ENCODE measurements at regions of chr1 and their contacts with region 1.

Region 1: DNA sequence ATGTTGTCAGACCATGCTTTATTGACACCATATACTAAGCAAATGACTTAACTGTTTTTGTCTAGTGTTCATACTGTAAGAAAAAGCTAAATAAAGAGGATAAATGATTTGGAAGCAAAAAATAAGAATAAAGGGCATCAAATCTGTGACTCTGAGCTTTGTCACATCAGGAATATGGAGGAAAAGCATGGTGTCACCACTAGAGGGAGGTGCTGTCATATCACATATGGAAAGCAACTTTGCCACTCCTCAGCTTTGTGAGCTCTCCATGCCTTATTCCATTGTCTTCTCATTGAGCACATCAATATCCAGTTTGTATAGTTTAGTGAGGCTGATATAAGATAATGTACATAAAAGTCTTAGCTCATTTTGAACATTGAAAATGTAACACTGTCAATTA is 20.8 kb upstream of the GBP1 start:
- DNase-seq: peak; percentile 80
- H3K4me3 Mint-ChIP-seq: no peak overlapping the region
- H3K27ac Mint-ChIP-seq: no peak overlapping the region
- H3K4me1 Mint-ChIP-seq: peaks cover 8% of the 10 kb centered on the region
- H3K27me3 Mint-ChIP-seq: no peaks in the 10 kb centered on the region

Region 2: GRCh38 chr1:89065079-89065868 is 20.5 kb before region 1 on chr1 and contains the start of gene GBP1:
- CTCF ChIA-PET with region 1: interaction called, 18 read pairs
- POLR2A ChIA-PET with region 1: no interaction called
- DNase-seq: peak; percentile 52
- H3K4me3 Mint-ChIP-seq: peak within 1 kb of the TSS; percentile 99
- H3K27ac Mint-ChIP-seq: peak within 1 kb of the TSS; percentile 94
- H3K4me1 Mint-ChIP-seq: peaks cover 60% of the 10 kb centered on the region
- H3K27me3 Mint-ChIP-seq: no peaks in the 10 kb centered on the region
- total RNA-seq, gene GBP1: 272 to 292 TPM

Region 3: DNA sequence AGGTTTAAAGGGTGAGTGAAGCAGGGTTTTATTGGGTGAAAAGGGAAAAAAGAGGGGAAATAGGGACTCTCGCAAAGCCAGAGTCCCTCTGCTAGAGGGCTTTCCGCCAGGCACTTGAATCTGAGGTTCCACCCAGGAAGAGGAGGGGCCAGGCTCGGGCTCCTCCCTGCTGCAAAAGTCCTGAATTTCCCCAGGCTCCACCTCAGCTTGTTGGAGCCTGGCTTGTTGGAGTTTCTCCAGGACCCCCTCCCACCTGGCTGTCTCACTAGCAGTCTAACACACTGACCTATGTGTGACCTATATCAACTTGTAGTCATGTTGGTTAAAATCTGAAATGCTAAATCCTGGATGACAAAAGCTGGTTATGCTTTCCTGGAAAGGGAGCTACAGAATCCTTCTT is 14.6 kb after region 1 on chr1:
- CTCF ChIA-PET with region 1: interaction called, 12 read pairs
- POLR2A ChIA-PET with region 1: no interaction called
- DNase-seq: no peak
- H3K4me3 Mint-ChIP-seq: no peak overlapping the region
- H3K27ac Mint-ChIP-seq: no peak overlapping the region
- H3K4me1 Mint-ChIP-seq: peaks cover 4% of the 10 kb centered on the region
- H3K27me3 Mint-ChIP-seq: no peaks in the 10 kb centered on the region

Region 4: GRCh38 chr1:89855413-89856123 is 769.8 kb after region 1 on chr1:
- CTCF ChIA-PET with region 1: no interaction called
- POLR2A ChIA-PET with region 1: interaction called, 10 read pairs
- DNase-seq: peak; percentile 23
- H3K4me3 Mint-ChIP-seq: peak overlapping the region; percentile 29
- H3K27ac Mint-ChIP-seq: no peak overlapping the region
- H3K4me1 Mint-ChIP-seq: peaks cover 9% of the 10 kb centered on the region
- H3K27me3 Mint-ChIP-seq: no peaks in the 10 kb centered on the region

Measured in activated CD4-positive, alpha-beta T cell treated with anti-CD3 and anti-CD28 coated beads, Interleukin-2, amount 10 ng/mL, durations not matched to agents 7 days and 5 days (primary cell).